Panc1 (cell line): ENCODE measurements at regions of chr12 and their contacts with region 1.

Region 1: GRCh38 chr12:96901175-96901574 is 5.9 kb upstream of the NEDD1 start:
- DNase-seq: no peak
- ATAC-seq: no peak
- H3K4me3 ChIP-seq: no peak overlapping the region
- H3K27ac ChIP-seq: no peak overlapping the region
- H3K4me1 ChIP-seq: peaks cover 2% of the 10 kb centered on the region
- H3K27me3 ChIP-seq: 0 out of 2 replicates have a peak, but pooled peaks cover 8% of the 10 kb centered on the region
- CTCF ChIP-seq: no peak

Region 2: DNA sequence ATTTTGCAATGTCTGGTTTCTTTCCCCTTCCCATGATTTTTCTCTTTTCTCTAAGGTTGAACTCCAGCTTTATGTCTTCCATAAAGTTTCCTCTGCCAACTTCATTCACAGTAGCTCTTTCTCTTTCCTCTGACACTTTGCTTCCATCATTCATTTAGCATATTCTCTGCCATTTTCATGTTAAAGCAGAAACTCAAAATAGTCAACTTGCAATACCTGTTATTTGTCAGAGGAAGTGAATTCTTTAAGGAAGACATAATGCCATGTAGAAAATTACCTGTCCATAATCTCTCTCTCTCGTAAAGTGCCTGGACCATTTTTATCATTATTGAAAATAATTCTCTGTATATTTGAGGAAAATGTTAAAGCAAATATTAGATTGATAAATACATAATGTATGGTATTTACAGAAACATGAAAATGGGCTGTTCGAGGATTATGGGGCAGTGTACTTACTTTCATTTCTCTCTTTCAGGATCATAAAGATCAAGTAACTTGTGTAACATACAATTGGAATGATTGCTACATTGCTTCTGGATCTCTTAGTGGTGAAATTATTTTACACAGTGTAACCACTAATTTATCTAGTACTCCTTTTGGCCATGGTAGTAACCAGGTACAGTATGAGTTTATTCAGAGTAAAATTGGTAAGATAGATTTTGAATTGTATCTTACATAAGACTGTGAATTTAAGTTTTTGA is 18.5 kb after region 1 on chr12:
- CTCF ChIA-PET with region 1: no interaction called
- POLR2A ChIA-PET with region 1: no interaction called
- in situ Hi-C with region 1: no loop called
- intact Hi-C with region 1: loop called (anchors 1 kb)
- DNase-seq: no peak
- ATAC-seq: no peak
- H3K4me3 ChIP-seq: no peak overlapping the region
- H3K27ac ChIP-seq: no peak overlapping the region
- H3K4me1 ChIP-seq: no peaks in the 10 kb centered on the region
- H3K27me3 ChIP-seq: no peaks in the 10 kb centered on the region
- CTCF ChIP-seq: no peak

Region 3: DNA sequence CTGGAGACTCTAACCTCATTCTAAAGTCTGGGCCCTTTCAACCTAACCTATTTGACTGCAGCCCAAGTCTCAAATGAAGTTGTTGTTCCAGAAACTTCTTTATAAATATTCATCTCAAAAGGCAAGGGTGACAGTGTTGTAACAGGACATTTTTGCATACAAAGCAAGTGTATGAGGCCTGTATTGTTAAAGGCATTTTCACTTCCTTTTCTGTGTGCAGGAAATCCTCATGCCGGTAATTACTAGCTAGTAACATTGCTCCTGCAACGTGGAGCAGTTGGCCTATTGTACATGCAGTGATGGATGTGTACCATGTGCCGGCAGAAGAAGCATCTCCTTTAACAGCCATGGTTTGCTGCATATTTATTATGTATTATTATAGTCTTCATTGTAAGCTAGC is 405.0 kb after region 1 on chr12:
- CTCF ChIA-PET with region 1: no interaction called
- POLR2A ChIA-PET with region 1: no interaction called
- in situ Hi-C with region 1: no loop called
- intact Hi-C with region 1: no loop called
- DNase-seq: no peak
- ATAC-seq: no peak
- H3K4me3 ChIP-seq: no peak overlapping the region
- H3K27ac ChIP-seq: no peak overlapping the region
- H3K4me1 ChIP-seq: no peaks in the 10 kb centered on the region
- H3K27me3 ChIP-seq: no peaks in the 10 kb centered on the region
- CTCF ChIP-seq: no peak